ENCODE measurements at regions of chrX and their contacts with region 1.

Region 1: DNA sequence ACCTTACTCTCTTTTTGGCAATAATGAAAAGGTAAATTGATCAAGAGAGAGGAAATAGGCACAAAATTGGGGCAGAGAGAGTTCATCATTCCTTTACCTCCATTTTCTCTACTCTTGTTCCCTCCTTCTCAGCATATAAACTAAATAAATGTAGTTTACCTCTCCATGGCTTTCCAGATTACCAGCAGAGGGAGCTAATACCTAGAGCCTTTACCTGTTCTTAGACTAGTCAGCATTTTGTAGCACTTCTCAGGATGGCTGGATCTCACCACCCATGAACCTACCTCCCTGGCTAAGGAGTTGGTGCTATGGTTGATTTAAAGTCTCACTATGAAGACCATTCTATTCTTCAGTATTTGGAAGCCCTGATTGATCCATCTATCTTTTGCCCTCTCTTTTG is 15.7 kb downstream of the OFD1 start:
- H3K4me3 ChIP-seq: no peak overlapping the region
- H3K27ac ChIP-seq: no peak overlapping the region
- H3K4me1 ChIP-seq: no peaks in the 10 kb centered on the region
- CTCF ChIP-seq: no peak

Region 2: DNA sequence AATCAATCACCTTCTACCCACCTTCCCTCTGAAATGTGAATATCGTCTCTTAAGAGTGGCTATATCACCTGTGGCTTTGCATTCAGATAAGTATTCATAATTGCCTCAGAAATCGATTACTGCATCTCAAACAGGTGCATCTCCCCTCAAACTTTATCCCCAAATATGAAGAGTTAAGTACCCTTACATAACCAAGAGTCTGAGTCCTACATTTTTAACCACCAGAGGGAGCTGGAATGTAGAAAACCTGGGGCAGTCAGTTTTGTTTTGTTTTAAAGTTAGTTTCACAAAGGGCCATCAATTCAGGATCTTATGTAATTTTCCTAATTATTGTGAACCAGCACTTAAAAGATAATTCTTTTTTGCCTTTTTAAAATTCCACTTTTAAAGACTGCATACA is 91.6 kb before region 1 on chrX:
- CTCF ChIA-PET with region 1: interaction called, 12 read pairs
- POLR2A ChIA-PET with region 1: no interaction called
- H3K4me3 ChIP-seq: no peak overlapping the region
- H3K27ac ChIP-seq: no peak overlapping the region
- H3K4me1 ChIP-seq: no peaks in the 10 kb centered on the region; the same call in 1 of the 2 replicates
- CTCF ChIP-seq: no peak

Region 3: DNA sequence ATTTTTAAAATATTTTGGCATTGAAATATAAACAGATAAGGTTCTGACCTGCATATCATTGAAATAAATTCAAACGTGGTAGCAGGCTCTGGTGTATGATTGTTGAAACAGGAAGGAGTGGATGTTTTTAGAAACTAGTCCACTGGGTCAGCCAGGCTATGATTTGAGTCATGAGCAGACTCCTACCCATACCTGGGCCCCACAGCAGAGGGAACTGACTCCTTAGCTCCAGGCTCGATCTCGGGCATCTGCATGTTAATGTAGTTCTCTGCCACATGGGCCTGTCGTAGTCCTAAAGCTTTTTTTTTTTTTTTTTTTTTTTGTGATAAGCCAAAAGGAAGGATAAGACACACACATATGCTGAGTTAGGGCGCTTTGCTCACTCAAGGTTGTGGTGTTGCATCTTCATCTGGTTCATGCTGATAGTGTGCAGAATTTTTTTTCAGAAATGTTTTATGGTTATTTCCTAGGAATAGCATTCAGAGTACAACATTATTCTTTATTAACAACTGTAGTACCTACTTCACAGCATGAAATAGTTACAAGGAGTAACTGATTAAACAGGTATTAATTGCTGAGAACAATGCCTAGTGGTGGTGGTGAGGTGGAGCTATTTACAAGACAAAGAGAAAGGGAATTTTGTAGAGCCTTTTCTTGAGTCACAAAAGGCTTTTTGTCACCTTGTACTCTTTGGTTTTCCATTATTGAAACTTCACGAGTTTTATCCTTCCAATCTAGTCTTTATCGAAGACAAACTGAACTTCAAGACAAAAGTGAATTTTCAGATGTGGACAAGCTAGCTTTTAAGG is 11.6 kb after region 1 on chrX:
- CTCF ChIA-PET with region 1: interaction called, 14 read pairs
- POLR2A ChIA-PET with region 1: interaction called, 3 read pairs
- H3K4me3 ChIP-seq: no peak overlapping the region
- H3K27ac ChIP-seq: no peak overlapping the region
- H3K4me1 ChIP-seq: no peaks in the 10 kb centered on the region
- CTCF ChIP-seq: no peak

Measured in HEK293 (cell line).